Calu3 (cell line): ENCODE measurements at regions of chr4 and their contacts with region 1.

Region 1: GRCh38 chr4:16140520-16141249 is 56.9 kb upstream of the PROM1 start:
- DNase-seq: peak; percentile 80
- H3K4me3 Mint-ChIP-seq: no peak overlapping the region
- H3K27ac Mint-ChIP-seq: peak overlapping the region; percentile 88
- H3K4me1 Mint-ChIP-seq: peaks cover 28% of the 10 kb centered on the region
- H3K27me3 Mint-ChIP-seq: no peaks in the 10 kb centered on the region
- CTCF ChIP-seq: no peak

Region 2: GRCh38 chr4:16001484-16001858 is 139.2 kb before region 1 on chr4:
- CTCF ChIA-PET with region 1: no interaction called
- intact Hi-C with region 1: no loop called
- DNase-seq: peak; percentile 33
- H3K4me3 Mint-ChIP-seq: no peak overlapping the region
- H3K27ac Mint-ChIP-seq: no peak overlapping the region
- H3K4me1 Mint-ChIP-seq: no peaks in the 10 kb centered on the region
- H3K27me3 Mint-ChIP-seq: no peaks in the 10 kb centered on the region
- CTCF ChIP-seq: peak; percentile 39

Region 3: DNA sequence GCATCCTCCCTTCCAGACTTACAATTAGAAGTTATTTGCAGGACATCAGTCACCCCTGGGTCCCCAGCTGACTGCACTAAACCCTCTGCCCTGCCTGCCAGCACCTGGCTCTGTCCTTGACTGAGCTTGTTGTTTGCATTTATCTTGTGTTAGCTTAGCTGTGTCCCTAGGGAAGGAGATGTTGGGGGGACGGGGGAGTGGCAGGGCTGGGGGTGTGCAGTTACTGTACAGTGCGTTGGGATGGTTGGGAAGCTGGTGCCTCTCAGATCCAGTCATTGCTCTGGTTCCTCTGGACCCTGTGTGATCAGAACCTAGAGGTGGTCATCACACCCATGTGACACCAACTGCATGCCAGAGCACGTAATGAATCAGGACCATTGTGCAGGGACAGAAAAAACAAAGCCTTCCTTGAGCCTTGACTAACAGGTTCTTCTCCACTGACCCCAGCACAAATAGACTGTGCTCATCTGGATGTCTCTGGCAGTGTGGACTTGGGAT is 24.1 kb before region 1 on chr4:
- CTCF ChIA-PET with region 1: interaction called, 3 read pairs
- intact Hi-C with region 1: loop called (anchors 1 kb)
- DNase-seq: peak; percentile 48
- H3K4me3 Mint-ChIP-seq: no peak overlapping the region
- H3K27ac Mint-ChIP-seq: peak overlapping the region; percentile 23
- H3K4me1 Mint-ChIP-seq: peaks cover 25% of the 10 kb centered on the region
- H3K27me3 Mint-ChIP-seq: no peaks in the 10 kb centered on the region
- CTCF ChIP-seq: no peak

Region 4: DNA sequence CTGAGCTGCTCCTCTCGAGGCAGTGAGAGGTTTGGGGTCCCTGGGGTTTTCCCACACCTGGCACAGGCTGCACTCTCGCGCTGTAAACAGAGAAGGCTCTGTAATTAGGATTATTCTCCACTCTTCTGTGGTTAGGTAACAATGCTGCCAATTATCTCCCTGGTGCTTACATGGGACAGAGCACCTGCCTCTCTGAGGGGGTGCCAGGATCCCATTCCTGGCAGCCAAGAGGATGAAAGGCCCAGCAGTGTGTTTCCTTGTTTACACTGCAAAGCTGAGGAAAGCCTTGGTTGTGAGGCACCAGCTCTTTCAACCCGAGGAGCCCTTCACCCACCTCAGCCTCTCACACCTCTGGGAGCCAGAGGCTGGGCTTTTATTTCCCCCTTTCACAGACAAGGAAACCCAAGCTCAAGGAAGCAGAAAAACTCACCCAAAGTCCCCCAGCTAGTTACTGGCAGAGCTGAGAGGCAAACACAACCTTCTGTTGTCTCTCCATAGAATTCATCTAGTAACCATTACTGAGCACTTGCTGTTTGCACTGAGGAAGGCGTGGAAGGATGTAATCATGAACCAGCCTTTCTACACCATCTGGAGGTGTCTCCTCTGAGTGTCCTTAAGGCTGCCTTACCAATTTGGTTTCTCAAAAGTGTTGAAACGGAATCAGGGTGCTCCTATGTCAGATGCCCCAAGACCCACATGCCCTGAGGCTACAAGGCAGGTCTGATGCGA is 17.2 kb before region 1 on chr4:
- CTCF ChIA-PET with region 1: interaction called, 3 read pairs
- intact Hi-C with region 1: loop called (anchors 1 kb)
- DNase-seq: peak; percentile 70
- H3K4me3 Mint-ChIP-seq: no peak overlapping the region
- H3K27ac Mint-ChIP-seq: peak overlapping the region; percentile 57
- H3K4me1 Mint-ChIP-seq: peaks cover 18% of the 10 kb centered on the region
- H3K27me3 Mint-ChIP-seq: no peaks in the 10 kb centered on the region
- CTCF ChIP-seq: no peak

Region 5: GRCh38 chr4:16377887-16378286 is 237.2 kb after region 1 on chr4:
- CTCF ChIA-PET with region 1: no interaction called
- intact Hi-C with region 1: no loop called
- DNase-seq: no peak
- H3K4me3 Mint-ChIP-seq: no peak overlapping the region
- H3K27ac Mint-ChIP-seq: no peak overlapping the region
- H3K4me1 Mint-ChIP-seq: no peaks in the 10 kb centered on the region
- H3K27me3 Mint-ChIP-seq: peaks cover 57% of the 10 kb centered on the region
- CTCF ChIP-seq: no peak